Activated CD8-positive, alpha-beta T cell treated with anti-CD3 and anti-CD28 coated beads for 36 hours (primary cell): ENCODE measurements at regions of chr15 and their contacts with region 1.

Region 1: DNA sequence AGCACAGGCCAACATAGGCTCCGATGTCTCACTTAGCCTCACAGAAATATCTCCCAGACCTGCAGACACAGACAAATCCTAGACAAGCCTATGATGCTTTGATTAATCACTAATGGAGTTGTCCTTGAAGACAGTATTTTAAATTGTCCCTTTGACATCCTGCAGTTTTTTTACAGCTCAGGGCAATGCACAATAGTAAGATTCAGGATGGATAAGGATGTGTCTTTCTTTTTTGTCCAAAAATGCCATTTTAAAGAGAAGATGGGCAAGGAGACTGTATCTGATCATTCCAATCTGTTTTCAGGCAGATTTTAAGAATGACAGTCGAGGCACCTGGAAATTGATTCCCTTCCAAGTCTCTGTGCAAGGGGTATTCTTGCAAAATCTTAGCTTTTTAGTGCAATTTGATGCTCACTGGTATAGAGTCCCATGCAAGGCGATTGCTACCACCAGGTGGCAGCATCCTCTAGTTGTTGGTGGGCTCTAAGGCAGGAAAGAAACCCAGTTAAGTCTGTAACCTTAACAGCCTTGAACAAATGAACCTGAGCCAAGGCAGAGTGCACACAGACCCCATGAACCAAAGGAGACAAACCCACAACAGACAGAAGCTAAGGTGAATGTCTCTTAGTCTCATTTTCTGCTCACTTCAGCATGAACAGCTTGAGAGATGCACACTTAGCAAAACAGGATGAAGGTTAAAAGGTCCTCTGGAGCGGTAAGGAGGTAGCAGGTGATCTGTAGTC is 51.2 kb upstream of the MINAR1 start:
- DNase-seq: peak; percentile 89
- ATAC-seq: peak; percentile 83
- H3K4me3 Mint-ChIP-seq: no peak overlapping the region
- H3K27ac Mint-ChIP-seq: no peak overlapping the region
- H3K4me1 Mint-ChIP-seq: peaks cover 4% of the 10 kb centered on the region
- H3K27me3 Mint-ChIP-seq: no peaks in the 10 kb centered on the region
- CTCF ChIP-seq: peak; percentile 85

Region 2: DNA sequence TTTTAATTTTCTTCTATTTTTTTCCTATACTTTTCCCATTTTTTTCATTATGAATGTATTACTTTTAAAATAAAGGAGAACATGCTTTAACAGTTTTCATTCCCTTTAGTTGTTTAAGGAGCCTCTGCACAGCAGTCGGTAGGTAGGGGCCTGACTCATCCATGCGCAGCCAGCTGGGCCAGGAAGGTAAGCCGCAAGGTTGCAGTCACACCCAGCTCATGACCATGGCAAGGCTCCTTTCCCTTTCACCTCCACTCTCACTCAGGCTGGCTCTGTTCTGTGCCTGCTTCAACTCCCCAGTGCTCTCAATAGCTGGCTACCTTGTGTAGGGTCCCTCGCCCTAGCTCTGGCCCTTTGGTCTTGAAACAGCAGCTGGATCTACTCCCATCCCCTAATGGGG is 115.8 kb before region 1 on chr15:
- CTCF ChIA-PET with region 1: no interaction called
- POLR2A ChIA-PET with region 1: no interaction called
- intact Hi-C with region 1: no loop called
- DNase-seq: no peak
- ATAC-seq: no peak
- H3K4me3 Mint-ChIP-seq: no peak overlapping the region
- H3K27ac Mint-ChIP-seq: no peak overlapping the region
- H3K4me1 Mint-ChIP-seq: no peaks in the 10 kb centered on the region
- H3K27me3 Mint-ChIP-seq: peaks cover 22% of the 10 kb centered on the region
- CTCF ChIP-seq: no peak

Region 3: DNA sequence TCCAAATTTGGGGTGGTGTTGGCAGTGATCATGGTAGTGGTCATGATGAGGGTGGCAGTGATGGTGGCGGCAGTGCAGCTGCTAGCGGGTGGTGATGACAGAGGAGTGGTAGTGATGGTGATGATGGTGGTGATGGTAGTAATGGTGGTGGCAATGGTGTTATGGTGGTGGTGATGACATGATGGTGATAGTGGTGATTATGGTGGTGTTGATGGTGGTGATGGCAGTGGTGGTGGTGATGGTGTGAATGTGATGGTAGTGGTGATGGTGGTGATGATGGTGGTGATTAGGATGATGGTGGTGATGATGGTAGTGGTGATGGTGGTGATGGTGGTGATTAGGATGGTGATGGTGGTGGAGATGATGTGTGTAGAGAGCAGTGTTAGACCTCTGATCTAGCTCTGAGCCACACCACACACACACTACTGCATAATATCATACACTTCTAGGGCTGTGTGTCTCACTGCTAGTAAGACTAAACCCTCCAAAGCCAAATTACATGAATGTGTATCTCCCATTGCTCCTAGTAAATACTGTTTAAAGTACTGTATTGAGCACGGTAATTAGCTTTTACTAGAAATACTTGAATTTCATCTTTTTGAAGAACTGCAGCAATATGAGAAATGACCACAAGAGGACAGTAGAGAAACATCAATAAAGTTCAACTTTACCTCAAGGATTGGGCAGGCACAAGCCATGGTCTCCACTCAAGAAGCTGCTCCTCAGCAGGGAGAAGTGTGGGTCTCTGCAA is 41.2 kb before region 1 on chr15:
- CTCF ChIA-PET with region 1: interaction called, 18 read pairs
- POLR2A ChIA-PET with region 1: no interaction called
- intact Hi-C with region 1: no loop called
- DNase-seq: peak; percentile 6
- ATAC-seq: no peak
- H3K4me3 Mint-ChIP-seq: no peak overlapping the region
- H3K27ac Mint-ChIP-seq: no peak overlapping the region
- H3K4me1 Mint-ChIP-seq: no peaks in the 10 kb centered on the region
- H3K27me3 Mint-ChIP-seq: no peaks in the 10 kb centered on the region
- CTCF ChIP-seq: peak; percentile 71

Region 4: GRCh38 chr15:79394231-79394630 is 13.3 kb after region 1 on chr15:
- CTCF ChIA-PET with region 1: interaction called, 26 read pairs
- POLR2A ChIA-PET with region 1: no interaction called
- intact Hi-C with region 1: no loop called
- DNase-seq: no peak
- ATAC-seq: no peak
- H3K4me3 Mint-ChIP-seq: no peak overlapping the region
- H3K27ac Mint-ChIP-seq: no peak overlapping the region
- H3K4me1 Mint-ChIP-seq: no peaks in the 10 kb centered on the region
- H3K27me3 Mint-ChIP-seq: no peaks in the 10 kb centered on the region
- CTCF ChIP-seq: no peak

Region 5: DNA sequence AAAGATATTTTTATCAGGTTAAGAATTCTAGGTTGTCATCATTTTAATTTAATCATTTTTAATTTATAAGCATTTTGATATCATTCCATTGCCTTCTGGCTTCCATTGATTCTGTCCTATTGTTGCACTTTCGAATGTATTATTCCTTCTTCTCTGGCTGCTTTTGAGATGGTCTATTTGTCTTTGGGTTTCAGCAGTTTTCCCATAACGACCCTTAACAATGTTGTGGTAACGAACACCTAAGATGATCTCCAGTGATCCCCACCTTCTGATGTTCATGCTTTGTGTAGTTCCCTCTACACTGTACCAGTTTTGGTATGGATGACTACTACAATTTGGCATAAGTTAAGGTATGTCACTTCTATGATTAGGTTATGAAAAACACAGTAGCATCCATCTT is 111.1 kb after region 1 on chr15:
- CTCF ChIA-PET with region 1: no interaction called
- POLR2A ChIA-PET with region 1: no interaction called
- intact Hi-C with region 1: no loop called
- DNase-seq: no peak
- ATAC-seq: no peak
- H3K4me3 Mint-ChIP-seq: no peak overlapping the region
- H3K27ac Mint-ChIP-seq: no peak overlapping the region
- H3K4me1 Mint-ChIP-seq: no peaks in the 10 kb centered on the region
- H3K27me3 Mint-ChIP-seq: peaks cover 9% of the 10 kb centered on the region
- CTCF ChIP-seq: no peak

Region 6: DNA sequence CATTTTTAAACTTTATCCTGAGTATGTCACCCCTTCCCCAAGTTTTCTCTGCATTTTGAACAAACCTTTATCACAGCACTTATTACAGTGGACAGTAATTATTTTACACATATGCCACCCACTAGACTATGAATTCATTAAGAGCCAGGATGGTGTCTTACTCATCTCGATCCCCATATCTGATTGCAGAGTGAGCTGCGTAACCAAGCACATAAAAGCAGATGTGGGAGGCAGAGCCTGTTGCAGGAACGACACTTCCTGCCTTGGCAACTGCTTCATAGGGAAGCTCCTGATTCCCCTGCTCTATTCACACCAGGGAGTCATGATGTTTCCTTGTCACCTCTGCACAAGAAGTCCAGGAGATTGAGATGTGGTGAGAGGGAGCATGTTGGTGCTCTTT is 142.3 kb after region 1 on chr15:
- CTCF ChIA-PET with region 1: no interaction called
- POLR2A ChIA-PET with region 1: no interaction called
- intact Hi-C with region 1: no loop called
- DNase-seq: no peak
- ATAC-seq: no peak
- H3K4me3 Mint-ChIP-seq: no peak overlapping the region
- H3K27ac Mint-ChIP-seq: no peak overlapping the region
- H3K4me1 Mint-ChIP-seq: no peaks in the 10 kb centered on the region
- H3K27me3 Mint-ChIP-seq: peaks cover 8% of the 10 kb centered on the region
- CTCF ChIP-seq: no peak

Region 7: DNA sequence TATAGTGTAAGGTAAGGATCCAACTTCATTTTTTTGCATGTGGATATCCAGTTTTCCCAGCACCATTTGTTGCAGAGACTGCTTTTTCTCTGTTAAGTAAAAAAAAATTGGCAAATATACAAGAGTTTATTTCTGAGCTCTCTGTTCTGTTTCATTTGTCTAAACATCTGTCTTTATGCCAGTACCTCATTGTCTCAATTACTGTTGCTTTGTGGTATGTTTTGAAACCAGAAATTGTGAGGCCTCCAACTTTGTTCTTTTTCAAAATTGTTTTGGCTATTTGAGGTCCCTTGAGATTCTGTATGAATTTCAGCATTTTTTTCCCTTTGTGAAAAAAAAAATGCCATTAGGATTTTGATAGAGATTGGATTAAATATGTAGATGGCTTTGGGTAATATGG is 201.7 kb after region 1 on chr15:
- CTCF ChIA-PET with region 1: interaction called, 10 read pairs
- POLR2A ChIA-PET with region 1: no interaction called
- intact Hi-C with region 1: no loop called
- DNase-seq: no peak
- ATAC-seq: no peak
- H3K4me3 Mint-ChIP-seq: no peak overlapping the region
- H3K27ac Mint-ChIP-seq: no peak overlapping the region
- H3K4me1 Mint-ChIP-seq: no peaks in the 10 kb centered on the region
- H3K27me3 Mint-ChIP-seq: peaks cover 23% of the 10 kb centered on the region
- CTCF ChIP-seq: no peak

Region 8: GRCh38 chr15:79989682-79990081 is 608.8 kb after region 1 on chr15:
- CTCF ChIA-PET with region 1: interaction called, 7 read pairs
- POLR2A ChIA-PET with region 1: no interaction called
- intact Hi-C with region 1: loop called (anchors 5 kb)
- DNase-seq: no peak
- ATAC-seq: no peak
- H3K4me3 Mint-ChIP-seq: no peak overlapping the region
- H3K27ac Mint-ChIP-seq: no peak overlapping the region
- H3K4me1 Mint-ChIP-seq: peaks cover 6% of the 10 kb centered on the region
- H3K27me3 Mint-ChIP-seq: no peaks in the 10 kb centered on the region
- CTCF ChIP-seq: no peak